MCF 10A (cell line): ENCODE measurements at regions of chr3 and their contacts with region 1.

Region 1: GRCh38 chr3:149717391-149718056 is 34.8 kb downstream of the COMMD2 start:
- DNase-seq: peak; percentile 76
- H3K4me3 Mint-ChIP-seq: no peak overlapping the region
- H3K27ac Mint-ChIP-seq: no peak overlapping the region
- H3K4me1 Mint-ChIP-seq: no peaks in the 10 kb centered on the region
- H3K27me3 Mint-ChIP-seq: no peaks in the 10 kb centered on the region
- CTCF ChIP-seq: peak; percentile 66

Region 2: GRCh38 chr3:149494022-149494758 is 223.3 kb before region 1 on chr3:
- CTCF ChIA-PET with region 1: interaction called, 20 read pairs
- POLR2A ChIA-PET with region 1: no interaction called
- intact Hi-C with region 1: no loop called
- DNase-seq: peak; percentile 73
- H3K4me3 Mint-ChIP-seq: no peak overlapping the region
- H3K27ac Mint-ChIP-seq: no peak overlapping the region
- H3K4me1 Mint-ChIP-seq: no peaks in the 10 kb centered on the region
- H3K27me3 Mint-ChIP-seq: peaks cover 15% of the 10 kb centered on the region
- CTCF ChIP-seq: peak; percentile 77

Region 3: GRCh38 chr3:149527531-149528339 is 189.8 kb before region 1 on chr3:
- CTCF ChIA-PET with region 1: interaction called, 28 read pairs
- POLR2A ChIA-PET with region 1: no interaction called
- intact Hi-C with region 1: loop called (anchors 1 kb)
- DNase-seq: no peak
- H3K4me3 Mint-ChIP-seq: no peak overlapping the region
- H3K27ac Mint-ChIP-seq: peak overlapping the region; percentile 20
- H3K4me1 Mint-ChIP-seq: peaks cover 6% of the 10 kb centered on the region
- H3K27me3 Mint-ChIP-seq: no peaks in the 10 kb centered on the region
- CTCF ChIP-seq: no peak

Region 4: GRCh38 chr3:149566292-149566975 is 151.1 kb before region 1 on chr3:
- CTCF ChIA-PET with region 1: interaction called, 80 read pairs
- POLR2A ChIA-PET with region 1: interaction called, 4 read pairs
- intact Hi-C with region 1: loop called (anchors 1 kb)
- DNase-seq: no peak
- H3K4me3 Mint-ChIP-seq: no peak overlapping the region
- H3K27ac Mint-ChIP-seq: no peak overlapping the region
- H3K4me1 Mint-ChIP-seq: peaks cover 10% of the 10 kb centered on the region
- H3K27me3 Mint-ChIP-seq: no peaks in the 10 kb centered on the region
- CTCF ChIP-seq: no peak

Region 5: GRCh38 chr3:149705416-149705815 is 12.1 kb before region 1 on chr3:
- CTCF ChIA-PET with region 1: interaction called, 15 read pairs
- POLR2A ChIA-PET with region 1: interaction called, 3 read pairs
- intact Hi-C with region 1: no loop called
- DNase-seq: no peak
- H3K4me3 Mint-ChIP-seq: no peak overlapping the region
- H3K27ac Mint-ChIP-seq: no peak overlapping the region
- H3K4me1 Mint-ChIP-seq: peaks cover 5% of the 10 kb centered on the region
- H3K27me3 Mint-ChIP-seq: no peaks in the 10 kb centered on the region
- CTCF ChIP-seq: no peak

Region 6: GRCh38 chr3:149850787-149851584 is 133.5 kb after region 1 on chr3:
- CTCF ChIA-PET with region 1: no interaction called
- POLR2A ChIA-PET with region 1: no interaction called
- intact Hi-C with region 1: no loop called
- DNase-seq: no peak
- H3K4me3 Mint-ChIP-seq: no peak overlapping the region
- H3K27ac Mint-ChIP-seq: no peak overlapping the region
- H3K4me1 Mint-ChIP-seq: peaks cover 7% of the 10 kb centered on the region
- H3K27me3 Mint-ChIP-seq: no peaks in the 10 kb centered on the region
- CTCF ChIP-seq: no peak